ENCODE measurements at regions of chr2 and their contacts with region 1.

Region 1: DNA sequence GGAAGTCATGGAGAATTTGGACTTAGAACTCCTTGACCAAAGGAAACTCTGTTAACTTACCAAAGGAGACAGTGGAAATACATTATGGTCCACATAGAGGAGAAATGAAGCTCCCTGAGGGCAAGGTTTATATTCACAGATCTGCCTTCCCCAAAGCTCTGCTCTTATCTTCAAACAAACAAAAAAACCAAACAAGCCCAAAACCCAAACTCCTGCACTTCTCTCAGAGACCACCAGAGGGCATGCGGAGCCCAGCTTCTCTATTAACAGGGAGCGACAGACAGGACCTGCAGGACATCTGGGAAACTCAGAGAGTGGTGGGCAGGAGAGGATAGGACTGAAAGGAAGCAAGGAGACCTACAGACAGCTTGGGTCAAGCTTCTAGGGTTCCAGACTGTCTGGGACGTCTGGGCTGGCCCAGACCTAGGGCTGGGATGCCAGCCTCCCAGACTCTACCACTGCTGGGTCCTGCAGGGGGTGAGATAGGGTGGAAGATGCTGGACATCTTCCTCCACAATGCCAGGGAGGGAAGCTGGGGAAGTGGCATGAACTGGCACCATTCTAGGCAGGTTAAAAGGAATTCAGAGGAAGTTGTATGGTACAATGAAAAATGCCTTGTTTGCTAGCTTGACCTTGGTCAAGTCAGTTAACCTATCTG is 4.0 kb upstream of the WNT10A start:
- H3K4me3 ChIP-seq: no peak overlapping the region
- H3K27ac ChIP-seq: no peak overlapping the region
- H3K4me1 ChIP-seq: no peaks in the 10 kb centered on the region
- CTCF ChIP-seq: peak; percentile 84

Region 2: DNA sequence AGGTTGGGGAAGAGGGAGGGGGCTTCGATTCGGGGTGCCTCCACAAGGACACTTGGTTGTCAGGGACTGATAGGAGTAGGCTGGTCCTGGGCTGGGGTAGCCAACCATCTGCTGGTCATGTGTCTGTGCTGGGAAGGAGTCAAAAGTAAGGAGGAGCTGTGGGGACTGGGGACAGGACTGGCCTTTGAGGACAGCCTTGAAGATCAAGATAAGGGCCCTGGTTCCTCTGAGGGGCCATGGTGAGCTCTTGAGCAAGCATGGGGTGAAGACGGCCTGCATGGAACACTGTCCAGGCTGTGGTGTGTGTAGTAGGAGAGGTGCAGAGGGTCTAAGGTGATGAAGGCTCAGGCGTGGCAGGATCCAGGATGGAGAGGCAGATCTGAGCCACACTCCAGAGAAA is 93.0 kb before region 1 on chr2:
- CTCF ChIA-PET with region 1: no interaction called
- POLR2A ChIA-PET with region 1: no interaction called
- H3K4me3 ChIP-seq: no peak overlapping the region
- H3K27ac ChIP-seq: no peak overlapping the region
- H3K4me1 ChIP-seq: no peaks in the 10 kb centered on the region
- CTCF ChIP-seq: no peak

Region 3: DNA sequence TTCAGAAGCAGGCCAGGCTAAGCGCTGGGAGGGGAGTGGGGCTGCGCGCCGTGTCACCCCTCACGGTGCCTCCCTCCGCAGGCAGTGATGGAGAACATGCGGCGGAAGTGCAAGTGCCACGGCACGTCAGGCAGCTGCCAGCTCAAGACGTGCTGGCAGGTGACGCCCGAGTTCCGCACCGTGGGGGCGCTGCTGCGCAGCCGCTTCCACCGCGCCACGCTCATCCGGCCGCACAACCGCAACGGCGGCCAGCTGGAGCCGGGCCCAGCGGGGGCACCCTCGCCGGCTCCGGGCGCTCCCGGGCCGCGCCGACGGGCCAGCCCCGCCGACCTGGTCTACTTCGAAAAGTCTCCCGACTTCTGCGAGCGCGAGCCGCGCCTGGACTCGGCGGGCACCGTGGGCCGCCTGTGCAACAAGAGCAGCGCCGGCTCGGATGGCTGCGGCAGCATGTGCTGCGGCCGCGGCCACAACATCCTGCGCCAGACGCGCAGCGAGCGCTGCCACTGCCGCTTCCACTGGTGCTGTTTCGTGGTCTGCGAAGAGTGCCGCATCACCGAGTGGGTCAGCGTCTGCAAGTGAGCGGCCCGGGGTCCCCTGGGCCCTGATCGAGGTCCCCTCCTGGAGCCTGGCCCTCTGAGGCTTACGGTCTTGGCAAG is 16.1 kb after region 1 on chr2:
- CTCF ChIA-PET with region 1: interaction called, 552 read pairs
- POLR2A ChIA-PET with region 1: interaction called, 19 read pairs
- H3K4me3 ChIP-seq: peak overlapping the region; percentile 6
- H3K27ac ChIP-seq: no peak overlapping the region
- H3K4me1 ChIP-seq: no peaks in the 10 kb centered on the region; the same call in 1 of the 2 replicates
- CTCF ChIP-seq: peak; percentile 83

Region 4: DNA sequence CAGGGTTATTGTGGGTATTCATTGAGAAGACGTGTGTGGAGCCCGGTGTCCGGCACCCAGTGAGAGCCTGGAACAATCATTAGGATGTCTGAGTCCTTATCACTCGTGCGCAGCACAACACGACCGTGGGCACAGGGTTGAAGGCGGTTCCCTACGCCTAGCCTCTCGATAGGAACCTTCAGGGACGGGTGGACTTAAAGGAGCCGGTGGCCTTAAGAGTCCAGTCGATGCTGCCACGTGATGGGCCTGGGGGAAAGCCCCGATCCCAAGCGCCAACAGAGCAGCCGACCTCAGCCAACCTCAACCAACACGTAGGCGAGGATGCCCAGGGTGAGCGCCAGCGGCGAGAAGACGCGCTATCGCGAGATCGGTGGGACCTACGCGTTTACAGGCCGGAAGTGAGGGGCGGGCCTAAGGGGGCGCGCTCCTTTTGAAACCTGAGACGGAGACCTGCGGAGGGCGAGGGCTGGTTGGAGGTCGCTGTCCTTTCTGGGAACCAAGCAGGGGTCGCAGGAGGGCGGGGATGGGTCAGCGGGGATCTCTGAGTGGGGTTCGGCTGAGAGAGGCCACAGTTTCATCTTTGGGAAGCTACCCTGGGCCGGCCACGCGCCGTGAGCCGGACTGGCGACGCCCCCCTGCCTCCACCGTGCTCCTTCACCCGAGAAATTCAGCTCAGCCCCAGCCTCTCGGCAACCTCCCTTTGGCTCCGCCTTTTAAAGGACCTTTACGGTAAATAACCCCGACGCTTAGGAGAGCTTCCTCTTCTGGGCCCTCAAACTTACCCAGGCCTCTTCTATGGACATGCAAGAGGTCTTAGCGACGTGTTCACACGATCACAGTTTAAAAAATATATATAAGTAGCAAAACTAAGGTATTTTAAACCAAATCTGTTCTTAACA is 32.3 kb after region 1 on chr2:
- CTCF ChIA-PET with region 1: interaction called, 552 read pairs
- POLR2A ChIA-PET with region 1: no interaction called
- H3K4me3 ChIP-seq: peak overlapping the region; percentile 72
- H3K27ac ChIP-seq: peak overlapping the region; percentile 56
- H3K4me1 ChIP-seq: no peaks in the 10 kb centered on the region
- CTCF ChIP-seq: no peak; the same call in 1 of the 2 replicates

Region 5: DNA sequence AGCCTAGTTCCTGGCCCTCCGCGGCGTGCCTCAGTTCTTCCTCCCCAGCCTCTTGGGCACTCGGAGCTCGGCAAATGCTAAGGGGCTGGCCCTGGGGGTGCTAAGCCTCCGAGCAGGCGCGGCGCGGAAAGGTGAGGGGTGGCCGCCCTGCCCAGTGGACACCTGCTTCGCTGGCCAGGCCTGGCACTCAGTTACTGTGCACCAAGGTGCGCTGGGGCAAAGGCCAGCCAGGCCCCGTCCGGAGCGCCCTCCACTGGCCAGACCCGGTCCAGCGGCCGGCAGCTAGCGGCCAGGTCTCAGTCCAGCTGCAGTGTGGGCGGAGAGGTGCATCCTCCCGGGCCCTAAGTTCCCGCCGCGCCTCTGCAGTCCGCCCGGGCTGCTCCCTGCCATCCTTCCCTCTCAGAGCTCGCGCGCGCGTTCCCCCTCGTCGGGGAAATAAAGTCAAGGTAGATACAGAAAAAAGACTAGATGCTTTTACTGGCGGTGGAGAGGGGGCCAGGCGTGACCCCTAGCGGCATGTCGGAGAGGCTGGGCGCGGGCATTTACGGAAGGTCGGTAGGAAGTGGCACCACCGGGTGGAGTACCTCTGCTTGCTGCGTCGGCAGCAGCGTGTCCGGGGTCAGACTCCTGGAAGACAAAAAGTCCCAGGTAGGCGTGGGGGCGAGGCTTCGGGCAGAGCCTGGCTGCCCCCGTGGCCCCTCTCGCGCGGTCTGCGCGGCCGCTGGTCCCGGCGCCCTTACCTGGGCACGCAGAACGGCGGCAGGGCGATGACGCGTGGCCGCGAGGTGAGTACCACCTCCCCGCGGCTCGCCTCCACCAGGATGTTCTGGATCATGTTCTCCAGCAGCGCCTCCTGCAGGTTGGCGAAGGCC is 125.9 kb after region 1 on chr2:
- CTCF ChIA-PET with region 1: interaction called, 10 read pairs
- POLR2A ChIA-PET with region 1: no interaction called
- H3K4me3 ChIP-seq: peak overlapping the region; percentile 28
- H3K27ac ChIP-seq: no peak overlapping the region; the same call in 1 of the 2 replicates
- H3K4me1 ChIP-seq: no peaks in the 10 kb centered on the region
- CTCF ChIP-seq: peak; percentile 86